ENCODE measurements at regions of chr17 and their contacts with region 1.

Region 1: DNA sequence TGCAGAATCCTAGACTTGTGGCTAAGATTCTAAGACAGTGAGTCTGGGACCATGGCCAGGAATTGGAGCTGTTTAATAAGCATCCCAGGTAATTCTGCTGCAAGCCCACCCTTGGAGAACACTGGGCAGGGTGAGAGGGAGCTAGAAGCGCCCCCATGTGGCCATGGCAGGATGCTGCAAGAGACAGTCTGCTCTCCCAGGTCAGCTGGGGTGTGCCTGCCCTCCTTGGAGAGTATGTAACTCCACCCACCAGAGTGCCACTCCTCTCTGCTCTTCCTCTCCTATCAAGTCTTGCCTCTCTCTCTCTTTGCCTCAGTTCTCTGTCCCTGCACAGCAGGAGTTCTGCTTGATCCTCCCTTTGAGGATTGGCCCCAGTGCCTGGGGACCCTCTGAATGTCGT is 14.9 kb downstream of the RCVRN start:
- DNase-seq: peak; percentile 79
- ATAC-seq: peak; percentile 100
- H3K4me3 Mint-ChIP-seq: no peak overlapping the region
- H3K27ac Mint-ChIP-seq: no peak overlapping the region
- H3K4me1 Mint-ChIP-seq: 0 out of 2 replicates have a peak, but pooled peaks cover 3% of the 10 kb centered on the region
- H3K27me3 Mint-ChIP-seq: no peaks in the 10 kb centered on the region; the same call in 1 of the 2 replicates
- CTCF ChIP-seq: peak; percentile 93

Region 2: DNA sequence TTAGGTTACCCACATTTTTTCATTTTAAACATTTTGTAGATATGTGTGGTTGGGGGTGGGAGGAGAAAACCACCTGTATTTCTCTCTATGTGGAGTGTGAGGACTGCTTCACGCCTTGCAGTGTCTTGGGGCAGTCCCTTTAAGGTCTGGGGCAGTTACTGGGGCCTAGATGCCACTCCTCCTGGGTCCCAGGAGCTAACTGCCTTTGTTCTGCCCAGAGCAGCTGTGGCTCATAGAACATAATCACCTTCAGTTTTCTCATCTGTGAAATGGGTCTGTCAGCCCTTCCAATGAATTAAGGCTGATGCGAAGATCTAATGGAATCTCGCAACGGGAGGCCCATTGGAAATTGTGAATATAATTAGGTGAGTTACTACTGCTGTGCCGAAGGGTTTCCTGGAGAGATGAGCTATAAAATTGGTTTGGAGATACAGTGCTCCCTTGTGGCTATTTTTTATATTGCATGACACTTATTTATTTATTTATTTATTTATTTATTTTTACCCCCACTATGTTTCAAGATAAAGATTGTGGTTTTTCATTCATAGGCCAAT is 121.7 kb before region 1 on chr17:
- CTCF ChIA-PET with region 1: interaction called, 22 read pairs
- POLR2A ChIA-PET with region 1: no interaction called
- DNase-seq: no peak
- ATAC-seq: no peak
- H3K4me3 Mint-ChIP-seq: no peak overlapping the region
- H3K27ac Mint-ChIP-seq: no peak overlapping the region
- H3K4me1 Mint-ChIP-seq: no peaks in the 10 kb centered on the region
- H3K27me3 Mint-ChIP-seq: peaks cover 4% of the 10 kb centered on the region; the same call in 1 of the 2 replicates
- CTCF ChIP-seq: peak; percentile 67

Region 3: DNA sequence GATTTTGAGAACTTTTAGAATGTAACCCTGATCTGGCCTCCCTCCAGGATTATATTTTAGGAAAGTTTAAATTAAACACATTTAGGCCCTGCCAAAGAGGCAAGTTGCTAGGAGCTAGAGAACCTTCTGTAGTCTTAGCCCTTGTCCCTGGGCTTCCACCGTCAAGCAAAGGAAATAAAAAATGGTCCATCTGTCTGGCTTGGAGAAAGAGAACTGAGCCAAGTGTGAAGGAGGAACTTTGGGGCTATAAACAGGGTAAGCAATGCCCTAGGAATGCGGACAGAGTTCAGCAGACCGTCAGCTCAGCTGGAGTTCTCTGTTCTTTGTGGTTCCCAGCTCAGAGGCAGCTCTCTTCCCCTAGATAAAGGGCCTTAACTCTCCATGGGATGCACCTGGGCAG is 14.7 kb before region 1 on chr17:
- CTCF ChIA-PET with region 1: interaction called, 23 read pairs
- POLR2A ChIA-PET with region 1: no interaction called
- DNase-seq: no peak
- ATAC-seq: peak; percentile 68
- H3K4me3 Mint-ChIP-seq: no peak overlapping the region
- H3K27ac Mint-ChIP-seq: no peak overlapping the region
- H3K4me1 Mint-ChIP-seq: peaks cover 6% of the 10 kb centered on the region
- H3K27me3 Mint-ChIP-seq: no peaks in the 10 kb centered on the region
- CTCF ChIP-seq: no peak

Region 4: GRCh38 chr17:9905902-9906301 is 15.8 kb after region 1 on chr17:
- CTCF ChIA-PET with region 1: interaction called, 39 read pairs
- POLR2A ChIA-PET with region 1: no interaction called
- DNase-seq: peak; percentile 74
- ATAC-seq: peak; percentile 79
- H3K4me3 Mint-ChIP-seq: no peak overlapping the region
- H3K27ac Mint-ChIP-seq: no peak overlapping the region
- H3K4me1 Mint-ChIP-seq: peaks cover 16% of the 10 kb centered on the region
- H3K27me3 Mint-ChIP-seq: no peaks in the 10 kb centered on the region; the same call in 1 of the 2 replicates
- CTCF ChIP-seq: peak; percentile 82

Region 5: GRCh38 chr17:9937241-9937761 is 47.2 kb after region 1 on chr17:
- CTCF ChIA-PET with region 1: no interaction called
- POLR2A ChIA-PET with region 1: no interaction called
- DNase-seq: no peak
- ATAC-seq: no peak
- H3K4me3 Mint-ChIP-seq: no peak overlapping the region
- H3K27ac Mint-ChIP-seq: no peak overlapping the region
- H3K4me1 Mint-ChIP-seq: no peaks in the 10 kb centered on the region
- H3K27me3 Mint-ChIP-seq: no peaks in the 10 kb centered on the region
- CTCF ChIP-seq: no peak